Activated T-helper 1 cell treated with anti-CD3 and anti-CD28 coated beads, Interleukin-12 subunit alpha, Interleukin-12 subunit beta, Interleukin-2, Interleukin-4 antibody, amounts not matched to agents 30 ng/mL and 10 ng/mL and 1 ng/mL, durations not matched to agents 14 hours and 24 hours and 36 hours (primary cell): ENCODE measurements at regions of chr17 and their contacts with region 1.

Region 1: DNA sequence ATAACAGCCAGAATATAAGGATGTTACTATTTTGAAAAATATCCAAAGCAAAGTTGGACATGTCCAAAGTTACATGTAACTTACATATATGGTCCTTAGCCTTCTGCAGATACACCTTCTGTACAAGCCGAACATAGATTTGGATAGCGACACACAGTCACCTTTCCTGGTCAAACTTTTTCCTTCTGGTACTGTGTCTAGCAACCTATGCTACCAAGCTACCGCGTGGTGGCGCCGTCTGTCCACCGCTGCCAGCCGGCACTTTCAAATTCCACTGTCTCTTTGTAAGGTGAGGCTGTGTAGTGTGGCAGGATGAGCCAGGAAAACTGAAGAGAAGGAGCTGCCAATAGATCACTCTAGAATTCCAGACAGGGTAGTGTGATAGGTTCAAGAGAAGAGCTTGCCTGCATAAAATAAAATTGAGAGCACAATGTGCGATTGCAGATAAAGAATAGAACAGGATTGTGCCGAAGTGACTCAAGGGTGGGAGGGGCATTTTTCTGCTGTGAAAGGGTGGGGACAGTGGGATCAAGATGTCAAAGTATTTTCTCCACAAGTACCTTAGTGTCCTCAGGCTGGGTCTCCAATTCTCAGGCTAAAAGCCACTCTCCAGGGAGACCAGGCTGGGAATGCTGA is 366.9 kb downstream of the SLC39A11 start:
- DNase-seq: peak; percentile 32
- H3K4me3 Mint-ChIP-seq: peak overlapping the region; percentile 40
- H3K27ac Mint-ChIP-seq: peak overlapping the region; percentile 76
- H3K4me1 Mint-ChIP-seq: peaks cover 43% of the 10 kb centered on the region
- H3K27me3 Mint-ChIP-seq: peaks cover 2% of the 10 kb centered on the region

Region 2: GRCh38 chr17:71987634-71988033 is 737.9 kb before region 1 on chr17:
- intact Hi-C with region 1: no loop called
- DNase-seq: no peak
- H3K4me3 Mint-ChIP-seq: no peak overlapping the region
- H3K27ac Mint-ChIP-seq: no peak overlapping the region
- H3K4me1 Mint-ChIP-seq: no peaks in the 10 kb centered on the region
- H3K27me3 Mint-ChIP-seq: no peaks in the 10 kb centered on the region

Region 3: GRCh38 chr17:72556944-72557826 is 168.4 kb before region 1 on chr17:
- intact Hi-C with region 1: loop called (anchors 1 kb)
- DNase-seq: peak; percentile 38
- H3K4me3 Mint-ChIP-seq: no peak overlapping the region
- H3K27ac Mint-ChIP-seq: no peak overlapping the region
- H3K4me1 Mint-ChIP-seq: no peaks in the 10 kb centered on the region
- H3K27me3 Mint-ChIP-seq: no peaks in the 10 kb centered on the region

Region 4: GRCh38 chr17:72705905-72706395 is 19.6 kb before region 1 on chr17:
- intact Hi-C with region 1: loop called (anchors 2 kb)
- DNase-seq: no peak
- H3K4me3 Mint-ChIP-seq: peak overlapping the region; percentile 45
- H3K27ac Mint-ChIP-seq: peak overlapping the region; percentile 89
- H3K4me1 Mint-ChIP-seq: peaks cover 58% of the 10 kb centered on the region
- H3K27me3 Mint-ChIP-seq: no peaks in the 10 kb centered on the region

Region 5: DNA sequence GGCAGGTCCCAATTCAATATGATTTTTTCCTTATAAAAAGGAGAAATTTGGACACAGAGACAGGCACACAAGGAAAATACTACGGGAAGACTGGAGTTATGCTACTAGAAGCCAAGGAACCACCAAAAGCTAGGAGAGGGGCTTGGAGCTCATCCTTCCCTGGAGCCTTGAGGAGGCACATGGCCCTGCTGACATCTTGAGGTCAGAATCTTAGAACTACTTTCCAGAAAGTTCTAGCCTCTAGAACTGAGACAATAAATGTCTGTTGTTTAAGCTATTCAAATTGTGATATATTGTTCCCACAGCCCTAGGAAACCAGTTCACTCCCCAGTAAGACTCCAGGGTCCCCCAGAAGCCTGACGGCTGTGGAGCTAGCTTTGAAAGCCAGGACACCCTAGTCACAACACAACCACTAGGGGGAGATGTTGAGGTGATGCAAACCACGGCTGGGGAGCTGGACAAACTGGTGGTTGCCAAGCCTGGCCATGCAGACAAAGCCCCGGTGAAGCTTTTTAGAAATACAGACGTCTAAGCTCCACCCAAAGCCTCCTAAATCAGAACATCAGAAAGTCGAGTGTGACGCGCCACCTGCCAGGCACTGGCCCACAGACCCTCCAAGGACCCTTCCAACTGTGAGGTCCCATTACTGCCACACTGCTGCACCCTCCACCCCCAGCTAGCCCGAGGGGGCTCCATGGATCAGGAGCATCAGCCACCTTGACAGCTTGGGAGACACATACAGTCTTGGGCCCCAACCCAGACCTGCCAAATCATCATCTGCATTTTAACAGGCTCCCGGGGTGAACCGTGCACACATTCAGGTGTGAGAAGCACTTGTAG is 260.6 kb after region 1 on chr17:
- intact Hi-C with region 1: loop called (anchors 1 kb)
- DNase-seq: peak; percentile 28
- H3K4me3 Mint-ChIP-seq: no peak overlapping the region
- H3K27ac Mint-ChIP-seq: no peak overlapping the region
- H3K4me1 Mint-ChIP-seq: no peaks in the 10 kb centered on the region
- H3K27me3 Mint-ChIP-seq: no peaks in the 10 kb centered on the region

Region 6: GRCh38 chr17:73156166-73156840 is 430.8 kb after region 1 on chr17:
- intact Hi-C with region 1: loop called (anchors 1 kb)
- DNase-seq: peak; percentile 35
- H3K4me3 Mint-ChIP-seq: no peak overlapping the region
- H3K27ac Mint-ChIP-seq: no peak overlapping the region
- H3K4me1 Mint-ChIP-seq: no peaks in the 10 kb centered on the region
- H3K27me3 Mint-ChIP-seq: peaks cover 23% of the 10 kb centered on the region

Region 7: GRCh38 chr17:73231841-73232586 is 506.5 kb after region 1 on chr17:
- intact Hi-C with region 1: loop called (anchors 1 kb)
- DNase-seq: peak; percentile 97
- H3K4me3 Mint-ChIP-seq: peak overlapping the region; percentile 97
- H3K27ac Mint-ChIP-seq: peak overlapping the region; percentile 95
- H3K4me1 Mint-ChIP-seq: peaks cover 57% of the 10 kb centered on the region
- H3K27me3 Mint-ChIP-seq: no peaks in the 10 kb centered on the region

Region 8: DNA sequence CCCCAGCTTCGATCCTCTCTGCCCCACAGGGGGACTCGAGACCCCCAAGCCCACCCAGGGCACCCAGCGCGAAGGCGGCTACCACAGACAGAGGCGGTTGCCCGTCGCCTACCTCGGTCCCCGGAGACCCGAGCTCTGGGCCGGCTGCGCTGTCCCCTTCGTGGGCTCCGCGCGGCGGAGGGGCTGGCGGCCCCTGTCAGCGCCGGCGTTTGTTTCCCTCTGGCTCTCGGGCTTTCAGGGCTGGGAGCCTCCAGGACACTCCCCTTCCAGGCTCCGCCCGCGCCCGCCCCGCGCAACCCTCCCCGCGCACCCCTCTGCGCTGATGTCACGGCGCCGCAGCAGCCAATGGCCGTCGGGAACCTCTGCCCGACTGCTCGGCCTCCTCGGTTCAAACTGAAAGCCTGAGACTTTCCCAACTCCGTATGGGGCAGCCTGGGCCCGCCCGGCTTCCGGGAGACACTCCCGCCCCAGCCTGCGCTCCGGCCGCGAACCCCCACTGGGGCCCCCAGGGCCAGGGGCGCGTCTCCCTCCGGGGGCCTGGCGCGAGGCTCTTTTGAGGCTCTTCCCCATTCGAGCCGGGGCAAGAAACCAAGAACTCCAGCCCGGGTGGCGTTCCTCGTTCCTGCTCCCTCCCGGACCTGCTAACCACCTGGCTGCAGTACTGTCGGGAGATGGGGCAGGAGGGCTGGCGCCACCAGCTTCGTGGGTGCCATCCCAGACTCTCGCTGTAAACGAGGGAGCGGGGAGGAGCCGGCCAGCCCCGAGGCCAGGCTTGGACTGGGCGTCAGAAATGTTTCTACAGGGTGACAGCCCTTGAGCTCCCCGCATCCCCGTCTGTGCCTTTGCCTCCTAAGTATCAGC is 586.5 kb after region 1 on chr17 and contains the start of gene CDC42EP4:
- intact Hi-C with region 1: loop called (anchors 2 kb)
- DNase-seq: peak; percentile 84
- H3K4me3 Mint-ChIP-seq: peak within 1 kb of the TSS; percentile 85
- H3K27ac Mint-ChIP-seq: no peak within 1 kb of the TSS
- H3K4me1 Mint-ChIP-seq: peaks cover 7% of the 10 kb centered on the region
- H3K27me3 Mint-ChIP-seq: peaks cover 18% of the 10 kb centered on the region
- total RNA-seq, gene CDC42EP4: 0.78 and 1.1 TPM in 2 replicates